Posterior vena cava (tissue), 2 donors: ENCODE measurements at regions of chr12 and their contacts with region 1.

Region 1: GRCh38 chr12:5200278-5201087 is 156.8 kb downstream of the KCNA5 start:
- DNase-seq: no peak

Region 2: DNA sequence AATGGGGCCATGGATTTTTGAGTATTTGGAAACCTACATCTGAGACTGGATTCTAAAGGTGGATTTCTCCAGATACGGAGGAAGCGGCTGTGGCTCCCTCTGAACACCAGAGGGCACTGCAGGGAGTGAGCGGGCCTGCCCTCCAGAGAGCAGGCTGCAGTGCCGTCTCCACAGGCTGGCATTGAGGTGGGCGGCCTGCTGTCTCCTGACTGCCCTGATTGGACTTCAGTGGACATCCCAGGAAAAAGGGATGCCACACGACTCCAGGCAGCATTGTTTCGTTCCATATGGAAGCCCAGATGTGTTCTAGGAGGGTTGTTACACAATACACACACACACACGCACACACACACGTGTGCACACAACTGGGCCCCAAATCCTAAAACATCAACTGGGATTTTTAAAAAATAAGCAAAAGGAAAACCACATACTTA is 765.5 kb after region 1 on chr12:
- intact Hi-C with region 1: loop called in 1 of 2 experiments (anchors 5 kb)
- DNase-seq: no peak